Activated CD4-positive, alpha-beta memory T cell treated with anti-CD3 and anti-CD28 coated beads, Interleukin-2, amount 10 ng/mL, durations not matched to agents 7 days and 5 days (primary cell): ENCODE measurements at regions of chr19 and their contacts with region 1.

Region 1: GRCh38 chr19:18281082-18282020 is at the start of gene JUND:
- DNase-seq: peak; percentile 99
- H3K4me3 Mint-ChIP-seq: peak within 1 kb of the TSS; percentile 98
- H3K27ac Mint-ChIP-seq: peak within 1 kb of the TSS; percentile 95
- H3K4me1 Mint-ChIP-seq: peaks cover 50% of the 10 kb centered on the region
- H3K27me3 Mint-ChIP-seq: no peaks in the 10 kb centered on the region
- total RNA-seq, gene JUND: 390 to 402 TPM

Region 2: GRCh38 chr19:18141031-18141430 is 140.3 kb before region 1 on chr19:
- CTCF ChIA-PET with region 1: no interaction called
- POLR2A ChIA-PET with region 1: no interaction called
- DNase-seq: no peak
- H3K4me3 Mint-ChIP-seq: no peak overlapping the region
- H3K27ac Mint-ChIP-seq: no peak overlapping the region
- H3K4me1 Mint-ChIP-seq: no peaks in the 10 kb centered on the region
- H3K27me3 Mint-ChIP-seq: no peaks in the 10 kb centered on the region

Region 3: DNA sequence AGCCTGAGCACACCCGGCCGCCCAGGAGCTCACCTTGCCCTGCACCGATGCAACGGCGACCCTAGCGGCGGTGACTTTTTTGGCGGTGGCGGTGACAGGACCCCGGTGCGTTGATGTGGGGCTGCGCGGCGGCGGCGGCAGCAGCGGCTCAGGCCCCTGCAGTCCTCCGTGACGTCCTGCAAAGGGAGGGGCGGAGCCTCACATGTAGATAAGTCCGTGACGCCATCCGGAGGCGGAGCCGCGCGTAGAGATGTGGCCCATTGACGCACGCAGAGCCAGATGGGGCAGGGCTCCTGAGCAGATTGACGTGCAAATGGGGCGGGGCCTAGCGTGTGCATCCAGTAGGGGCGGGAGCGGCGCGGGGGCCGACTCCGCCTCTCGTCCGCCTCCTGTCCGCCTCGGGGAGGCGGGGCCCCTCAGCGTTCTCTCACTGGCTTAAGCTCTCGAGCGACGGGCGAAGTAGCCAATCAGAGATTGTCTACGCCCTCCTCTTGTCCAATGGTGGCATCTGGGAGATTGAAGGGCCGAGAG is 77.4 kb before region 1 on chr19 and contains the start of gene RAB3A:
- CTCF ChIA-PET with region 1: interaction called, 25 read pairs
- POLR2A ChIA-PET with region 1: interaction called, 36 read pairs
- DNase-seq: peak; percentile 100
- H3K4me3 Mint-ChIP-seq: peak within 1 kb of the TSS; percentile 90
- H3K27ac Mint-ChIP-seq: peak within 1 kb of the TSS; percentile 90
- H3K4me1 Mint-ChIP-seq: peaks cover 31% of the 10 kb centered on the region
- H3K27me3 Mint-ChIP-seq: peaks cover 5% of the 10 kb centered on the region
- total RNA-seq, gene RAB3A: 3.7 to 5.3 TPM

Region 4: DNA sequence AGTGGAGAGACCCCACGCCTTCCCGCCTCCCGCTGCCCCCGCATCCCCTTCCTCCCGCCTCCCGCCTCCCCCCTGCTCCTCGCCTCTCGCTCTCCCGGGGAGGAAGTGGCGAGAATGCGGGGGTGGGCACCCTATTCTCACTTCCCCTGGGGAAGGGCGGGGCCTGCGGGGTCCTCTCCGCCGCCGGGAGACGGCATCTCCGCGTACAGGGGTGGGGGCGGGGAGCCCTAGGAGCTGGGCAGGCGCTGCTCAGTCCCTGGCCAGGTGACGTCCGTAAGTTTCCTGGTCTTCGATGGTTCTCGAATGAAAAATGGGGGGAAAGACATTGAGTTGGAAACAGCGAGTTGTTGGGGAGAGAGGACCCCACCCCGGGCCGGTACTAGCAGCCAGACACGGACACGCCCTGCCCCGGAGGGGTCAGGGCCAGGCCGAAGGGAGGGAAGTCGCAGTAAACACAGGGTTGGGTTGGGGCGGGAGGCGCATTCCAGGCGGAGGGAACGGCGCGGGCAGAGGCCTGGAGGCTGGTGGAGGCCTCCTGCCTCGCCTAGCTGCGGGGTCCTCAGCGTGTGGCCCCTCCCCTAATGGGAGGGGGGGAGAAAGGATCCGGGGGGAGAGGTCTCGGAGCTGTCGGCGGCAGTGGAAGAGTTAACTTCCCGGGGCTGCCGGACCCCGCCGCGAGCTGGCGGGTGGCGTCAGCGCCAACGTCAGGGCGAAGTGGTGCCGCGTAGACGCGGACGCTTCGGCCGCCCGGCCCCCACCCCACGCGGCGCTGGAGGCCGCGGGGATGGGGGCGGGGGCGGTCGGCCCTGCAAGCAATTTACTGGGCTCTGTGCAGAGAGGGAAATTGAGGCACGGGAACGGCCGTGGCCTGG is 10.5 kb after region 1 on chr19:
- CTCF ChIA-PET with region 1: interaction called, 176 read pairs
- POLR2A ChIA-PET with region 1: interaction called, 709 read pairs
- DNase-seq: peak; percentile 90
- H3K4me3 Mint-ChIP-seq: peak overlapping the region; percentile 96
- H3K27ac Mint-ChIP-seq: peak overlapping the region; percentile 97
- H3K4me1 Mint-ChIP-seq: peaks cover 79% of the 10 kb centered on the region
- H3K27me3 Mint-ChIP-seq: no peaks in the 10 kb centered on the region

Region 5: DNA sequence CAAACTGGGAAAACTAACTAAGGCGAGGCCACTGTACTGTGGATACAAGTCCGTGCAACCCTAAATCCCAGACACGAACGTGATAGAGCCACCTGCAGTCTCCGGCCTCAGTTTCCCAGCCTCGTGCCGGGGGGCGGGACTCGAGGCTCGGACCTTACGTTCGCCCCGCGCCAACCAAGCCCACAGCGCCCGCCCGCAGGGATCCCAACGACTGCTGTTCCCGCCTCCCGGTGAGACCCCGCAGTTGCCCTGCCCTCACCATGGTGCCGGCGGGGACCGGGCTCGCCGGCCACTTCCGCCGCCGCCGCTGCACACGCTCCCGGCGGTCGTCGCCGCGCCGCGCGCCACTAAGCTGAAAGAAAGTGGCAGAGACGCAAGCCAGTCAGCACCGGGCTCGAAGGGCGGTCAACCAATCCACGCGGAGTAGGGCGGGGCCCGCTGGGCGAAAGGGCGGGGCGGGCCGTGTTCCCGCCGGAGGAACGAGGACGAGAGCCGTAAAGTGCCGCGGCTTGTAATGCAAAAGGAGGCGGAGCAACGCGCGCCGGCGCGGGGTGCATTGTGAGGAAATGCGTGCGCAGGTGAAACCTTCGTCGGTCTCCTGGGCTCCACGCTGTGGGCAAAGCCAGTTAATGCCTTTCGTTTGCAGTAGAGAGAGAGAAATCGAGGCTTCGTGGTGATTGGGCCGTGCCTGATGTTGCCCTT is 41.6 kb after region 1 on chr19 and contains the start of gene LSM4:
- CTCF ChIA-PET with region 1: interaction called, 393 read pairs
- POLR2A ChIA-PET with region 1: interaction called, 1,184 read pairs
- DNase-seq: peak; percentile 100
- H3K4me3 Mint-ChIP-seq: peak within 1 kb of the TSS; percentile 91
- H3K27ac Mint-ChIP-seq: peak within 1 kb of the TSS; percentile 96
- H3K4me1 Mint-ChIP-seq: peaks cover 54% of the 10 kb centered on the region
- H3K27me3 Mint-ChIP-seq: no peaks in the 10 kb centered on the region
- total RNA-seq, gene LSM4: 180 to 186 TPM

Region 6: GRCh38 chr19:18388100-18388959 is 107.0 kb after region 1 on chr19:
- CTCF ChIA-PET with region 1: interaction called, 42 read pairs
- POLR2A ChIA-PET with region 1: interaction called, 10 read pairs
- DNase-seq: peak; percentile 81
- H3K4me3 Mint-ChIP-seq: peak overlapping the region; percentile 44
- H3K27ac Mint-ChIP-seq: no peak overlapping the region
- H3K4me1 Mint-ChIP-seq: peaks cover 17% of the 10 kb centered on the region
- H3K27me3 Mint-ChIP-seq: peaks cover 54% of the 10 kb centered on the region